Calu3 (cell line): ENCODE measurements at regions of chr1 and their contacts with region 1.

Region 1: GRCh38 chr1:96538111-96538641 is 183.4 kb upstream of the PTBP2 start:
- DNase-seq: no peak
- H3K4me3 Mint-ChIP-seq: no peak overlapping the region
- H3K27ac Mint-ChIP-seq: no peak overlapping the region
- H3K4me1 Mint-ChIP-seq: no peaks in the 10 kb centered on the region
- H3K27me3 Mint-ChIP-seq: no peaks in the 10 kb centered on the region
- CTCF ChIP-seq: no peak

Region 2: GRCh38 chr1:96362623-96363022 is 175.6 kb before region 1 on chr1:
- CTCF ChIA-PET with region 1: no interaction called
- intact Hi-C with region 1: loop called (anchors 5 kb)
- DNase-seq: peak; percentile 58
- H3K4me3 Mint-ChIP-seq: no peak overlapping the region
- H3K27ac Mint-ChIP-seq: peak overlapping the region; percentile 94
- H3K4me1 Mint-ChIP-seq: peaks cover 46% of the 10 kb centered on the region
- H3K27me3 Mint-ChIP-seq: no peaks in the 10 kb centered on the region
- CTCF ChIP-seq: no peak